Posterior cingulate gyrus (tissue), 11 donors: ENCODE measurements at regions of chr10 and their contacts with region 1.

Region 1: GRCh38 chr10:31318854-31319601 is at the start of gene ZEB1:
- DNase-seq: peak; percentile 37 to 93 (median 66)

Region 2: GRCh38 chr10:31031558-31032257 is 287.3 kb before region 1 on chr10 and contains the start of gene ZNF438:
- intact Hi-C with region 1: loop called (anchors 10 kb)
- DNase-seq: peak; percentile 86 to 99 (median 93)

Region 3: GRCh38 chr10:31133628-31134302 is 185.3 kb before region 1 on chr10:
- intact Hi-C with region 1: loop called (anchors 5 kb)
- DNase-seq: peak; percentile 64 to 97 (median 78)

Region 4: DNA sequence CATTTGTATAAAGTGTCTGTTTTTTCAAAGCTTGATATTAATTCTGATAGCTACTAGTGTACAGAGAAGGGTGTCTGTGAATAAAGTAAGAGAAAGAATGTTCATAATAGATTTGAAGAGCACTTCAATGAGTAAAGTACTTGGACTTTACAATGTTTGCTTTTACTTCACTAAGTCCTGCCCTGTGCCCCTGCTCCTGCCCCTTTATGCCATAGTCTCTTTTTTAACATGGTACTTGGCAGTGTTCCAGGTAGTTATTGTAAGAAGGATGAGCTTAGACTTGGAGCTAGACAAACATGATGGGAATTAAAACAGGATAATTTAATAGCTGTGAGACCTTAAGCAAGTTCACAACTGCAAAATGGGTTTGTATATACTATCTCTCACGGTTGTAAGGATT is 41.0 kb after region 1 on chr10:
- intact Hi-C with region 1: no loop called
- DNase-seq: no peak

Region 5: DNA sequence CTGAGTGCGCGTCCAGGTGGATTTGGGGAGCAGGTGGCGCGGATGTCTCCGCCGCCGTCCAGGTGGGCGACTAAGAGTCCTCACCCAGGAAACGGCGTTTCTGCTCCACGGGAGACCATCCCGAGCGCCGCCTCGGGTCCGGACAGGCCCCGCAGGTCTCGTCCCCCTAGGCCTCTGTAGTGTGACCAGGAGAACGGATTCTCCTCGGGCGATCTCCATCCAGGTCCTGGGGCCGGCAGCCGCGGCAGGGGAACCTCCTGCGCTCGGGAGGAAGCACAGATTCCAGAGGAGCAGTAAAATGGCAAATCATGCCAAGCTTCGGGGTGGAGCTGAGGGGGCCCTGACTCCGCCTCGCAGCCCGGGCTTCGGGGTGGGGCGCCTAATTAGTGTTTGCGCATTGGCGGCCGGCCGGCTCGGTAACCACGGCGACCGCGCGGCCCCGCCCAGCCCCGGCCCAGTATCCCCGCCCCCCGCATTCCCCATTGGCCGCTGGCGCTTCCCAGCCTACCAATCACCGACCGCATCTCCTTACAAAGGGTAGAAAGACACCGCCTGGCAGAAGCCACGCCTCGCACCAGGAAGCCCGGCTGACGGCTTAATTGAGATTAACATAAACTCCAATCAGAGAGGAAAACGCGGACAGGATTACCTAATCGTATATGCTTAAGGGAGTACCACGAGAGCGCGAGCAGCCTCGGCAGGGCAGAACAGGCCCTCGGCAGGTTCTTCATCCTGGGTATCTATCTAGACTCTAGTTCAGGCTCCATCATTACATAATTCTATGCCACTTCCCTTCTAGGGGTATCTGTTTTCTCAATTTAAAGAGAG is 441.0 kb after region 1 on chr10:
- intact Hi-C with region 1: loop called (anchors 5 kb)
- DNase-seq: peak; percentile 91 to 99 (median 96)

Region 6: DNA sequence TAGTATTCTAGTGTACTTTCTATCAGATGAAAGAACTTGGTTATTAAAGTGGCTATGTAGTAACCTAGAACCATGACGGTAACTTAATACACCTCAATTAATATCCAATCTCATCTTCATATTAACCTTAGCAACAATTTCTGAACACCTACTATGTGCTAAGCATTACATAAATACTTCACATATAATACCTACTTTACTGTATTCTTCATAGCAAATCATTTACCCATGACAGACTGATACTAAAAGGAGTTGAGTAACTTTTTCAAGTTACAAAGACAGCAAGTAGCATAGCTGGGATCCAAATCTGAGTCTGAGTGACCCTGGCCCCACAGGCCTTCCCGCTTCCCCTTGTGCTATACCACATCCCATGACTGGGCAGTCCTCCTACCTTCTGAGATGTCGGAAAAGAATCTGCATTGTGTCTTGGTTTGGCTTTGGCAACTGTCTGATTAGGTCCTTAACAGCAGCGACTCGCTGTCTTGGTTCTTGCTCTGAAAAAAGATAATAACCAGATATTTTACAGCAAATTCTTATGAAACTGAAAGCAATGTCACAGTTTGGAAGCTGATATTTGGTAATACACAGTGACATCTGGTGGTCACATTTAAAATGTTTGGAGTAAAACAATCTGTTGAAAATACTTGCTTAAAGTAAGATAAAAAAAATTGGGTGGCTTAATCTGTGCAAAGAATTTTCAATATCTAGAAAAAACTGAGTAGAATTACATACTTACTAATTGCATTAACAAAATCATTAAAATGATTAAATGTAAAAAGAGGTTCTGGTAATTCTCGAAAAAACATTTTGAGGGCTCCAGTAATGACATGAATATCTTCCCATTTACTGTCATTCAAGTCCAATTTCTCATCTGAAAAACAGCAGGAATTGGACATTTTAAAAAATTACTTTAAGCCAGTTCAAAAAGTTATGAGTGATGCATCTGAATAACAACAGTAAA is 489.5 kb after region 1 on chr10:
- intact Hi-C with region 1: loop called (anchors 5 kb)
- DNase-seq: peak in 2 of 10 donors; percentile 15 to 82